Activated T-helper 1 cell treated with anti-CD3 and anti-CD28 coated beads, Interleukin-12 subunit alpha, Interleukin-12 subunit beta, Interleukin-2, Interleukin-4 antibody, amounts not matched to agents 30 ng/mL and 10 ng/mL and 1 ng/mL, durations not matched to agents 14 hours and 24 hours and 36 hours (primary cell): ENCODE measurements at regions of chr3 and their contacts with region 1.

Region 1: DNA sequence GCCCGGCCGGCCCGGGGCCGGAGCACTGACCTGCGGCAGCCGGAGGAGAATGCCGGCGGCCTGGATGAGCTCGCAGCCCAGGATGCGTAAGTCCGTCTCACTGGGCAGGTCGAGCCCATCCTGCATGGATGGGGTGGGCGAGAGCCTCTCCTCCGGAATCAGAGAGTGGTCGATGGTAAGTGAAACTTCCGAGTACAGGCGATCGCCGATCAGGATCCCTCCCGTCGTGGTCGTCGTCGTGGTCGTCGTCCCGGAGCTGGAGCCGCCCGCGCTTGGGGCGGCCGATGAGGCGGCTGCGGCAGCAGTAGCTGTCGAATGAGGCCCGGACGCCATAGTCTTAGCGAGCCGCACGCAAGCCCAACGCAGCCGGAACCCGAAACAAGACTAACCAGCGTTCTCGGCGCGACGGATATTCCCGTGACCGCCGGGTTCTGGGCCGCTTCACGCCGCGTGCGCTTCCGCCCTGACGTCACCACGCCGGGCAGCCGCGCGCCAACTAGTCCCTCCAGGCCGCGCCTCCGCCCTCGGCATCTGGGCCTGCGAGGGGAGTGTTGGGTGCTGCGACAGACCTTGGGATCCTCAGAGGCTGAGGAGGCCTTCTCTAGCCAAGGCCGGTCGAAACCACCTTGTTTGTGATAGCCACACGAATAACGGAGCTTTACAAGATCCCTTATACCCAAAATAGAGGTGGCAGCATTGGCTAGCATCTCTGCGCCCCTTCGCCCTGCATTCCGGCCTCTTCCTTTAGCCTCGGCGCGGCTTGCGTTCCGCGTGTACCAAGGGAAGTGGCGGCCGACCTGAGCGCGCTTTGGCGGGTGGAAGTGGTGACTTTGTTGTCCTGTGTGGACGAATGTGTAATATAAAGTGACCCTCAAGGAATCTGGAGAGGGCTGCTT is at the start of gene CCNL1:
- DNase-seq: peak; percentile 95
- H3K4me3 Mint-ChIP-seq: peak within 1 kb of the TSS; percentile 93
- H3K27ac Mint-ChIP-seq: peak within 1 kb of the TSS; percentile 94
- H3K4me1 Mint-ChIP-seq: peaks cover 64% of the 10 kb centered on the region
- H3K27me3 Mint-ChIP-seq: no peaks in the 10 kb centered on the region
- total RNA-seq, gene CCNL1: 167 and 204 TPM in 2 replicates

Region 2: GRCh38 chr3:155854141-155854940 is 1305.7 kb before region 1 on chr3 and contains the start of gene SLC33A1:
- intact Hi-C with region 1: loop called (anchors 1 kb)
- DNase-seq: peak; percentile 98
- H3K4me3 Mint-ChIP-seq: peak within 1 kb of the TSS; percentile 91
- H3K27ac Mint-ChIP-seq: peak within 1 kb of the TSS; percentile 96
- H3K4me1 Mint-ChIP-seq: peaks cover 36% of the 10 kb centered on the region
- H3K27me3 Mint-ChIP-seq: no peaks in the 10 kb centered on the region
- total RNA-seq, gene SLC33A1: 27.4 and 30.7 TPM in 2 replicates

Region 3: DNA sequence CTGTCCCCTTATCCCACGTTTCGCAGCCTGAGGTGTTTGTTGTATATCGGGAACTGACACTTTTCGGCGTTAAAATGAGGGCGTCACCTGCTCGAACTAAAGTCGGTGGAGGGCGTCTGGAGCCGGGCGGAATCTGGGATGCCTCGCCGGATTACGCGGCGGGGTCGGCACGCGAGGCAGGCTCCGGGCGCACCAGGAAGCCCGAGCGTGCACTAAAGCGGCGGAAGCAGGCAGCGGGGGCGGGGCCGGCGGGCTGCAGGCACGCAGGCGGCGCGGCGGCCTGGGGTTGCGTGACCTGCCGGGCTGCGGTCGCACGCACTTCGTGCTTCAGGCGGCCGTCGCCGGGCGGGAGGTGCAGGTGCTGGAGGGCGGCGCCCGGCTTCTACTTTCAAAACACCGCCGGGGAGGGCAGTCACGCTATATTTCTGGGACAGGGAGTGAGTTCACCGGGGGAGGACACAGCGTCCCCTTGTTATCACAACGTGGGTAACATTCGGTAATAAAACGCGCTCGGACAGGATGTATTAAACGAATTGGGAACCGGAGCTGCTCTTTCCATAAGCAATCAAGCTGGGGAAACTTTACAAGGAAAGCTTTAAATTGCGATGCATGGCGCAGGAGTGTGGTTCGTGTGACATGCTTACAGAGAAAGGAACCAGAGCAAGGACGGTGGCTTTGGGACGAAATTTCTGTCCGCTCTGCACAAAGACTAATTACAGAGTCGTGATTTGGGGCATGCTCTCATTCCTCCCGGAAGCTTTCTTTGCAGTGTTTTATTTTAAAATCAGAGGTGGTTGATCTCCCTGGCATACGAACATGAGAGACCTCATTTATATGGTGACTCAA is 343.0 kb before region 1 on chr3:
- intact Hi-C with region 1: loop called (anchors 2 kb)
- DNase-seq: peak; percentile 90
- H3K4me3 Mint-ChIP-seq: peak overlapping the region; percentile 92
- H3K27ac Mint-ChIP-seq: peak overlapping the region; percentile 98
- H3K4me1 Mint-ChIP-seq: peaks cover 75% of the 10 kb centered on the region
- H3K27me3 Mint-ChIP-seq: no peaks in the 10 kb centered on the region

Region 4: DNA sequence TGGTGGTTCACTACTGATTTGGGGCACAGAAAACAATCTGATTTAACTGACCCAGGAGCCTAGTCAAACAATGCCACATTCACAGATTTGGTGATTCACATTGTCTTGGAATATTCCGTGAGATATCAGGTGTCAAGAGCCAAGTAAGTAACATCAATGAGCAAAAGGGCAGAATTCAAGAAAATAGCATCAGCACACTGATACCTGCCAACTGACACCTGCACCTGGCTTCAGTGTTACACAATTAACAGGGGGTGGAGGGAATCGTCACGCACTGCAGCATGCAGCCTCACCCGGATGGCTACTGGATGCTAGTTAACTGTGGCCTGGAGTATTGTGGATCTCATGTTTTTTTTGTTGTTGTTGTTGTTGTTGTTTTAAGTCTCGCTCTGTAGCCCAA is 17.7 kb before region 1 on chr3:
- intact Hi-C with region 1: loop called (anchors 2 kb)
- DNase-seq: no peak
- H3K4me3 Mint-ChIP-seq: no peak overlapping the region
- H3K27ac Mint-ChIP-seq: no peak overlapping the region
- H3K4me1 Mint-ChIP-seq: peaks cover 3% of the 10 kb centered on the region
- H3K27me3 Mint-ChIP-seq: no peaks in the 10 kb centered on the region

Region 5: DNA sequence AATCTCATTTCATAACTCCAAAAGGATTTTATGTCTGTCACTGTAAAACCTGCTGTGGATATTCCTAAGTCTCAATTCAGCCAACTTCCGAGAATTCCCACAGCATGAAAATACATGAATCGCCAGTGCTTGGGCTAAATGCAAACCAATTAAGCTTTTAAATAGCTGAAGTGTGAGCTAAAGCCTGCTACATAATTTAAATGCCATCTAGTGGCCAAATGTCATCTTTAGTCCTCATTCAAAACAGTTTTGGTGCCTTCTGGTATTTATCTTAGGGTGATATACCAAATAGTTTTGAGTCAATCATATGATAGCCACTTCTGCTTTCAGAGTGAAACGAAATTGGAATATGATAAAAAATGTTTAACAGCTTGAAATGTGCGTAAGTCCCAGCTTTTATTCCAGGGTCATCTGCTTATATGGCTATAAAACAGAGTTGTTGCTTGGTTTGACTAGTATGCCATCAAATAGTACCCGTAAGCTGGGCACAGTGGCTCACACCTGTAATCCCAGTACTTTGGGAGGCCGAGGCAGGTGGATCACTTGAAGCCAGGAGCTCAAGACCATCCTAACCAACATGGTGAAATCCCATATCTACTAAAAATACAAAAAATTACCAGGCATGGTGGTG is 41.8 kb after region 1 on chr3:
- intact Hi-C with region 1: loop called (anchors 1 kb)
- DNase-seq: no peak
- H3K4me3 Mint-ChIP-seq: no peak overlapping the region
- H3K27ac Mint-ChIP-seq: no peak overlapping the region
- H3K4me1 Mint-ChIP-seq: no peaks in the 10 kb centered on the region
- H3K27me3 Mint-ChIP-seq: peaks cover 18% of the 10 kb centered on the region

Region 6: DNA sequence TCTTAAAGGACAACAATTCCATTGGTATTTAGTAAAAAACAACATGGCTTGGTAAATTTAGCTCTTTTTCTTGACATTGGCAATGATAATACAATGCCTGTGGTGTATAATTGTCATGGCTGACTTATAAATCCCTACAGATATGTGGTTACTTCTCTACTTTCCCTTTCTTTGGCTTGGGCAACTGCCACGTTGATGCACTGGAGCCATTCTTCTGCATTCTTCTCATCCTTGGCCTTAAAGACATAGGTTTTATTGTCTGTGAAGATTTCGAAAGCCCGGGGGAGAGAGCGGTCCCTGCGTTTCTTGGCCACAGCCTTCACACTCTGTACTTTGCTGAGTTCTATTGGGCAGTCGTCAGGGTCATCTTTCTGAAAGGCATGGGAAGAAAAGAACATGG is 101.0 kb after region 1 on chr3:
- intact Hi-C with region 1: no loop called
- DNase-seq: no peak
- H3K4me3 Mint-ChIP-seq: no peak overlapping the region
- H3K27ac Mint-ChIP-seq: no peak overlapping the region
- H3K4me1 Mint-ChIP-seq: no peaks in the 10 kb centered on the region
- H3K27me3 Mint-ChIP-seq: peaks cover 10% of the 10 kb centered on the region

Region 7: DNA sequence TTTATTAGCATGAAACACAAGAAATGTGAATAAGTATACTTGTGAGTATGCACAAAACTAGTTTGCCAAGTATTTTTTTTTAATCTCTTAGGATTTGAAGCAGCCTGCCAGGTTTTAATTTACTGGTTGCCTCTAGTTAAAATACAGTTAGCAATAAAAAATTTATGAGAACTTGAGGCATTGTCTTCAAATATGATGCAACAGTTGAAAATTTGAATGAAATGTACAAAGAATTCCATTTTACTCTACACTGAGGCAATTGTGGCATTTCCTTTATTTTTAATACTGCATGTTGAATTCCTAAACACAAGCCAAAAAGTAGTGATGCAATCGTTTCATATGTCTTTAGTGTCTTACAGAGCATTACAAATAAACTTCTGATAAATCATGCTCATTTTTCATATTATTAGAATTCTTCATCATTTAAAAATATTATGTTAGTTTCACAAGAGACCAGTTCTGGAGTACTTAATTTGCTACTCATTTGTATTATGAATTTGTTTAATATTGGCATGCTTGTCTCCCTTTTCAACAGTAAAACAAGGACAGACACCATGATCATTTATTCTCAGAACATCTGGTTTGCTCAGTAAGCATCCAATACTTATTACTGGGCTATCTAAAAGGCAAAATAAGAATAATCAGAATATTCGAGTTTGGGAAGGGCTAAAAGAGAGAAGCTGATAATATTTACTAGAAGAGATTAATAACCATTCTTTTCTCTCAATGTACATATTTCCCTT is 151.8 kb after region 1 on chr3:
- intact Hi-C with region 1: no loop called
- DNase-seq: no peak
- H3K4me3 Mint-ChIP-seq: no peak overlapping the region
- H3K27ac Mint-ChIP-seq: no peak overlapping the region
- H3K4me1 Mint-ChIP-seq: no peaks in the 10 kb centered on the region
- H3K27me3 Mint-ChIP-seq: no peaks in the 10 kb centered on the region